ENCODE measurements at regions of chr2 and their contacts with region 1.

Region 1: GRCh38 chr2:102155642-102156491 is 13.3 kb downstream of the IL1R1 start:
- DNase-seq: no peak
- ATAC-seq: peak; percentile 67
- H3K4me3 ChIP-seq: no peak overlapping the region
- H3K27ac ChIP-seq: no peak overlapping the region
- H3K4me1 ChIP-seq: no peaks in the 10 kb centered on the region
- H3K27me3 ChIP-seq: no peaks in the 10 kb centered on the region

Region 2: DNA sequence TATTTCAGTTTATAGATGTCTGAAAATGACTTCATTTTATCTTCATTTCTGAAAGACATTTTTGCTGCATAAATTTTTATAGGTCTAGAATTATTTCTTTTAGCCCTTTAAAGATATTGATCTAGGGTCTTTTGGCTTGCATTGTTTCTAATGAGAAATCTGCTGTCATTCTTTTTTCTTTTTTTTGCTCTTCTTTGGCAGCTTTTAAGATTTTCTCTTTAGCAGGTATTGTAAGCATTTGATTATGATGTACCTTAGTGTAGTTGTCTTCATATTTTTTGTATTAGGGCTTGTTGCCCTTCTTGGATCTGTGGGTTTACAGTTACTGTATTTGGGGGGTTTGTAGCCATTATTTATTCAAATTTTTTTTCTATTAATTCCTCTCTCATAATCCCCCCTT is 79.4 kb before region 1 on chr2:
- intact Hi-C with region 1: loop called in 1 of 2 experiments (anchors 2 kb)
- DNase-seq: no peak
- ATAC-seq: no peak
- H3K4me3 ChIP-seq: no peak overlapping the region
- H3K27ac ChIP-seq: no peak overlapping the region
- H3K4me1 ChIP-seq: no peaks in the 10 kb centered on the region
- H3K27me3 ChIP-seq: no peaks in the 10 kb centered on the region

Region 3: DNA sequence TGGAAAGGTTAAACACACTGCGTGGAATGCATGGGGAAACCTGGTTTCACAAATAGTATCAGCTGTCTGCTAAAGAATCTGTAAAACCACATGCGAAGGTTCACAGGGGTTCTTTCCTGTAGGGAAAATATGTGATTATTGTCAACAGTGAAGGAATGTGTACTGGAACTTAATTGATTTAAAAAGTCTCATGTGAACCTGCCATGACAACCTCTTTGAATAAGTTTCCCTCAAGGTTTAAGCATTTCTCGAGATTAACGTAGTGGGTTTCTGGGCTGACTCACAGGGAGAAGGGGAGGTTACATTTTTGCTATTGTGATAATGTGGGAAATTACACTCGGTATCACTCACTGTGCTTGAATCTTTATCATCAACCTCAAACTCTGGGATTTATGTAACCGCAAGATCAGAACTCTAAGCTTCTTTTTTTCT is 41.6 kb before region 1 on chr2:
- intact Hi-C with region 1: no loop called
- DNase-seq: no peak
- ATAC-seq: no peak
- H3K4me3 ChIP-seq: no peak overlapping the region
- H3K27ac ChIP-seq: no peak overlapping the region
- H3K4me1 ChIP-seq: no peaks in the 10 kb centered on the region
- H3K27me3 ChIP-seq: no peaks in the 10 kb centered on the region